BJ (cell line): ENCODE measurements at regions of chr6 and their contacts with region 1.

Region 1: DNA sequence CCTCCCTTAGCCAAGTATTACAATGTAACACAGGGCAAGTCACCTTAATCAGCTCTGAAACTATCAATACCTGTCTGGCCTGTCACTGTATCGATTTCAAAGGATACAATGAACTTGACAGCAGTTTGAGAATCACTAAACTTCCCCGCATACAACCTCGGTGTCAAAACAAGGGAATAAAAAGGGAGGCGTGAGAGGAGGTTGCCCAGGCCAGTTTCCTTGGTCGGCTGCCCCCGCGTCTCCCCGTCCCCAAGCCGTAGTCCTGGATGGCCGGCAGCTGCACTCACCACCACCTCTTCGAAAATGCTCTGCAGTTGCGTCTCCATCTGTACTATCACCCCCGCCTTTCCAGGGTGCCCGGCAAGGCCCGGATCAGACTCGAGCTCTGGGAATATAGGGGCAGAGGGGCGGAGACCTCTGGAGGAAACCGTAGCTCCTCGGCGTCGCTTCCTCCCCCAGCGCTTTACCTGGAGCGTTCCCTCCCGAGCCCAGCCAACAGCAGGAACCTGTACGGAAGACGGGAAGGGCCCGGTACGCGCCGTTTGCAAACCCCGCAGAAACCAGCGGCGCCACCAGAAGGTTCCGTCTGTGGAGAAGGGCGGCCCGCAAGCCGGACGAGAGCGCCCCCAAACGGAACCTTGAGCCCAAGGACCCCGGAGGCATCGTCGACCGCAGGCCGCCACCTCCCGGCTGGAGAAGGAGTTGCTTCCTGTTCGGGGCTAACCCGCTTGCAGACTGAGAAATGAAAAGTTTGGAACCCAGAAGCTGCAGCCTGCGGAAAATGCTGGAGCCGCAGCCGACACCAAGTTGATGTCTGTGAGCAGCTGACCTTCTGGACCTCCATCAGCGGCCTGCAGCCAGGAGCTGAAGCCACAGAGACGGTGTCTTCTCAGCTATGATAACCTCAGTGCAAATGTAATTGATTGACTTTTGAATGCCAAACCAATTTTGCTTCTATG is at the start of gene MED23:
- DNase-seq: peak; percentile 61
- H3K4me3 ChIP-seq: peak within 1 kb of the TSS; percentile 74
- H3K27me3 ChIP-seq: no peaks in the 10 kb centered on the region
- CTCF ChIP-seq: peak; percentile 100
- polyA plus RNA-seq, gene MED23: 16.5 and 28.5 TPM in 2 replicates

Region 2: GRCh38 chr6:131586543-131586942 is 41.5 kb before region 1 on chr6:
- CTCF ChIA-PET with region 1: interaction called, 11 read pairs
- POLR2A ChIA-PET with region 1: no interaction called
- DNase-seq: no peak
- H3K4me3 ChIP-seq: no peak overlapping the region
- H3K27me3 ChIP-seq: no peaks in the 10 kb centered on the region
- CTCF ChIP-seq: no peak

Region 3: DNA sequence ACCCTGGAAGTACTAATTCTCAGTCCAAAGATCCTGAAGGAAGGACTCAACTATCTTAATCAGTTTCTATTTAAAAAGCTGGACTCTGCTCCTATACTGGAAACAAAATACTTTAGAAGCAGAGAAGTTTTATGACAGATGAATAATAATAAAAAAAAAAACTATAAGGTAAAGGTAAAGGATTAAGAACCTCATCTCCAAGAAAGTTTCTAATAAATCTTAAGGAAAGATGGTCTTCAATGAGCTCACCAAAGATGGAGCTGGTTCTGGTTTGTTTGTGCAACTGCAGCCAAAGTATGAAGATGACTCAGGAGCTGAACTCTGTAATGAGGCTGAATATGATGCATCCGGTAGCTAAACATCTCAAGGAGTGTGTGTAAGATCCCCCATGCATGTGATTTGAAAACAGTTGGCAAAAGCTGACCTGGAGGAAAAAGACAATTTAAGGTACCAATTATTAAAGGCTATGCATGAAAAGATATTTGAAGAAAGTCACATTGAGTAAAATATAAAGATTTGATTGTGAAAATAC is 25.2 kb before region 1 on chr6:
- CTCF ChIA-PET with region 1: interaction called, 22 read pairs
- POLR2A ChIA-PET with region 1: no interaction called
- DNase-seq: peak; percentile 64
- H3K4me3 ChIP-seq: no peak overlapping the region
- H3K27me3 ChIP-seq: no peaks in the 10 kb centered on the region
- CTCF ChIP-seq: no peak

Region 4: GRCh38 chr6:131613296-131613925 is 14.6 kb before region 1 on chr6:
- CTCF ChIA-PET with region 1: interaction called, 12 read pairs
- POLR2A ChIA-PET with region 1: no interaction called
- DNase-seq: no peak
- H3K4me3 ChIP-seq: no peak overlapping the region
- H3K27me3 ChIP-seq: no peaks in the 10 kb centered on the region
- CTCF ChIP-seq: no peak

Region 5: GRCh38 chr6:131652472-131652871 is 24.5 kb after region 1 on chr6:
- CTCF ChIA-PET with region 1: interaction called, 19 read pairs
- POLR2A ChIA-PET with region 1: interaction called, 3 read pairs
- DNase-seq: no peak
- H3K4me3 ChIP-seq: no peak overlapping the region
- H3K27me3 ChIP-seq: no peaks in the 10 kb centered on the region
- CTCF ChIP-seq: no peak

Region 6: GRCh38 chr6:131660195-131660594 is 32.2 kb after region 1 on chr6:
- CTCF ChIA-PET with region 1: interaction called, 19 read pairs
- POLR2A ChIA-PET with region 1: no interaction called
- DNase-seq: no peak
- H3K4me3 ChIP-seq: no peak overlapping the region
- H3K27me3 ChIP-seq: no peaks in the 10 kb centered on the region
- CTCF ChIP-seq: no peak

Region 7: GRCh38 chr6:131678442-131678841 is 50.4 kb after region 1 on chr6:
- CTCF ChIA-PET with region 1: no interaction called
- POLR2A ChIA-PET with region 1: no interaction called
- DNase-seq: no peak
- H3K4me3 ChIP-seq: no peak overlapping the region
- H3K27me3 ChIP-seq: no peaks in the 10 kb centered on the region
- CTCF ChIP-seq: no peak

Region 8: DNA sequence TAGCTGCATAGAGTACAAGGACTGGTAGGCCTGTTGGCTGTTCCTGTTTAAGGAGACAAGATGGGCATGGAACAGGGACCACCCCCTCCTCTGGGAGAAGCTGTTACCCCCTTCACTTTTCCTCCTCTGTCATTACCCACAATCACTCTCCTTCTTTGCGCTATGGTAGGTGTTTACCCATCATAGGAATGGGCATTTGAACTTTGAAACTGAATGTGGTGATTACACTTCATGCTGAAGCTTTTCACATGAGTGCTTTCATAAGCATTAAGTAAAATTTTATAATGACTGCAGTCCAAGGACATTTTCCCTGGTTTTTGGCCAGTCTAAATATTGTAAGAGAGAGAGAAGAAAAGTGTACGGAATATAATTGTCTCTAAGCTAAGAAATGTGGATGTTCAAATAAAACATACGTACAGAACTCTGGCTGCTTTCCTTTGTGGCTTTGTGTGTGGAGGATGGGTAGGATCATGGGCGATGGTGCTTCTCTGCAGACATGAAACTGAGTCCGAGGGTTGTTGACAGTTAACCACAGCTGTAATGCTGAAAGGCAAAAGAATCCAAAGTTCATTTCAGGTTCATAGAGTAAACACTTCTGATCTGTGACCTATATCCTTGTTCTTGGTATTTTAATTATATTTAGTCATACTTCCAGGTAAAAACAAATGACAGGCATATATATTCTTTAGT is 266.9 kb after region 1 on chr6:
- CTCF ChIA-PET with region 1: no interaction called
- POLR2A ChIA-PET with region 1: no interaction called
- DNase-seq: no peak
- H3K4me3 ChIP-seq: no peak overlapping the region
- H3K27me3 ChIP-seq: no peaks in the 10 kb centered on the region
- CTCF ChIP-seq: no peak